Posterior cingulate gyrus (tissue), 11 donors: ENCODE measurements at regions of chr19 and their contacts with region 1.

Region 1: GRCh38 chr19:35269421-35270117 is 807 bp downstream of the USF2 start:
- DNase-seq: peak; percentile 77 to 98 (median 88)

Region 2: GRCh38 chr19:35140962-35141637 is 128.5 kb before region 1 on chr19:
- intact Hi-C with region 1: loop called (anchors 1 kb)
- DNase-seq: peak; percentile 89 to 99 (median 96)

Region 3: DNA sequence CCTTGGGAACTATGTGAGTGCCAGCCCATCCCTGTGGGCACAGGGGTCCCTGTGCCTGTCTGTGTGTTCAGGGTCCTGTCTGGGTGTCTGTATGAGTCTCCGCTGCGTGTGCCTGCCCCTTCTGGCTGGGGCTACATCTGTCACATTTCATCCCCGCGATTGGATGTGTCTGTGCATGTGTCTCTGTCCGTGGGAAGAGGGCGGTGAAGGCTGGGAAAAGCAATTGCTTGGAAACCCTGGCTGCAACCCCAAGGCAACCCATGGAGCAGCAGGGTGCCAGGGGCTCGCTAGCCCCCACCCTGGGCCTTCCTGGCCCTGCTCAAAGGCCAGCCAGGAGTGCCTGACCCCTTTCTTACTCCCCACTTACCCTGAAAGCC is 23.8 kb after region 1 on chr19:
- intact Hi-C with region 1: loop called (anchors 2 kb)
- DNase-seq: peak in 6 of 10 donors; percentile 64 to 94 (median 70)

Region 4: GRCh38 chr19:35347171-35347929 is 77.8 kb after region 1 on chr19 and contains the start of gene FFAR1:
- intact Hi-C with region 1: loop called (anchors 5 kb)
- DNase-seq: peak in 5 of 10 donors; percentile 5 to 49 (median 31)

Region 5: GRCh38 chr19:35495107-35496064 is 225.8 kb after region 1 on chr19:
- intact Hi-C with region 1: loop called (anchors 10 kb)
- DNase-seq: peak; percentile 32 to 96 (median 67)